ENCODE measurements at regions of chr3 and their contacts with region 1.

Region 1: DNA sequence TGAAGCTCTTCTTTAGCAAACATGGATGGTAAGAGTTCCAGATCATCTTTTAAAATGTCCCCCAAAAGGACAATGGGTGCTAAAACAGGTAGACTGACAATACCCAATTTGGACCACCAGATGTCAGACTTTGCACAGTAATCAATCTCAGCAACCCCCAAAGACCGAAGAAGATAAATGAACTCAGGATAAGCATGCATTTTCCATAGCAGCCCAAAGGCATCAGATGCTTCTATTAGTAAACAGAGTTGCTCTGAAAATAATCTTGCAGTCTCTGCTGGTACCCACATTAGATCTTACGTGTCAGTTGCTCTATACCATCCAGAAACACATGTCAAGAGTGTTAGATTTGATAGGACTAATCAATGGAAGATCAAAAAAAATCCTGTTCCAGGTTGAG is 20.6 kb downstream of the MYH15 start:
- DNase-seq: peak; percentile 51
- H3K4me3 ChIP-seq: no peak overlapping the region
- H3K27ac ChIP-seq: no peak overlapping the region
- H3K4me1 ChIP-seq: no peaks in the 10 kb centered on the region
- CTCF ChIP-seq: peak; percentile 91

Region 2: GRCh38 chr3:108914774-108915641 is 425.2 kb after region 1 on chr3:
- CTCF ChIA-PET with region 1: no interaction called
- POLR2A ChIA-PET with region 1: no interaction called
- intact Hi-C with region 1: loop called (anchors 1 kb)
- DNase-seq: peak; percentile 56
- H3K4me3 ChIP-seq: no peak overlapping the region
- H3K27ac ChIP-seq: no peak overlapping the region
- H3K4me1 ChIP-seq: no peaks in the 10 kb centered on the region
- CTCF ChIP-seq: peak; percentile 91

Measured in OCI-LY7 (cell line).